Tibial artery (tissue), 4 donors: ENCODE measurements at regions of chr18 and their contacts with region 1.

Region 1: DNA sequence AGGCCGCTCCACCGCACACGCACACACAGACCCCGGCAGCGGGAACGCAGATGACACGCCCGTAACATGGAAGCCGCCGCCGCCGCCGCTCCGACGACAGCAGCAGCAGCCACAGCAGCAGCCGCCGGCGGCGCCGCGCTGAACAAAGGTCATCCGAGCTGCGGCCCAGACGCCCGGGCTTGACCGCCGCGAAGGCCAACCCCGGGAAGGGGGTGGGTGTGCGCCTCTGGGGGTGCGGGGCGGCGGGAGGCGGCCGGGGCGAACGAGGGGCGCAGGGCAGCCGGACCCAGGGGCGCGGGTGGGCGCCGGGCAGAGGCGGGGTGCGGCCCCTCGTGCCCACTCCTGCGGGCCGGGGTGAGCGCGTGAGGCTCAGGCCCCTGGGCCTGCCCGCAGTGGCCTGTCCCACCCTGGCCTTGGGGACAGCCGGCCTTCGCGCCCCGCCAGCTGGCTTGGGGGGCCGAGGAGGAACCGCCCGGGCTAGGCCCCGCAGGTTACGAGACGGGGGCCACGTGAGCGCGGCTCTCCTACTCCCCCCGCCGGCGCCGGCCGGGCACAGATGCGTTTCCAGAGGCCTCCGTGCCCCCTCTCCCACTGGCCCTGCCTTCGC is 1.0 kb upstream of the ZNF532 start:
- DNase-seq: peak; percentile 52 to 78
- H3K4me3 ChIP-seq: peak overlapping the region; percentile 52 to 63
- H3K27ac ChIP-seq: peak overlapping the region; percentile 98 to 100
- H3K4me1 ChIP-seq: peaks cover 0 to 95% (median 65%) of the 10 kb centered on the region in 4 donors
- H3K27me3 ChIP-seq: no peaks in the 10 kb centered on the region
- CTCF ChIP-seq: no peak

Region 2: GRCh38 chr18:58937071-58937886 is 73.6 kb after region 1 on chr18:
- intact Hi-C with region 1: no loop called
- DNase-seq: no peak
- H3K4me3 ChIP-seq: no peak overlapping the region
- H3K27ac ChIP-seq: peak overlapping the region in 1 of 2 donors; percentile 9
- H3K4me1 ChIP-seq: peaks cover 0 to 32% (median 11%) of the 10 kb centered on the region in 4 donors
- H3K27me3 ChIP-seq: no peaks in the 10 kb centered on the region
- CTCF ChIP-seq: no peak

Region 3: GRCh38 chr18:58998401-58999203 is 135.0 kb after region 1 on chr18:
- intact Hi-C with region 1: loop called (anchors 10 kb)
- DNase-seq: peak; percentile 79 to 87
- H3K4me3 ChIP-seq: peak overlapping the region in 1 of 2 donors; percentile 5
- H3K27ac ChIP-seq: peak overlapping the region; percentile 78 to 84
- H3K4me1 ChIP-seq: peaks cover 0 to 66% (median 43%) of the 10 kb centered on the region in 4 donors
- H3K27me3 ChIP-seq: no peaks in the 10 kb centered on the region
- CTCF ChIP-seq: peak in 1 of 2 experiments; percentile 55

Region 4: GRCh38 chr18:59767732-59768131 is 904.1 kb after region 1 on chr18:
- intact Hi-C with region 1: no loop called
- DNase-seq: no peak
- H3K4me3 ChIP-seq: no peak overlapping the region
- H3K27ac ChIP-seq: no peak overlapping the region
- H3K4me1 ChIP-seq: peaks cover 0 to 7% (median 3%) of the 10 kb centered on the region in 4 donors
- H3K27me3 ChIP-seq: no peaks in the 10 kb centered on the region
- CTCF ChIP-seq: no peak